Mammary epithelial cell (primary cell): ENCODE measurements at regions of chr15 and their contacts with region 1.

Region 1: GRCh38 chr15:97995881-97996603 is 35.5 kb downstream of the ARRDC4 start:
- DNase-seq: peak; percentile 89
- H3K4me3 ChIP-seq: peak overlapping the region; percentile 26 to 41 (median 30)
- H3K27ac ChIP-seq: peak overlapping the region; percentile 92
- H3K4me1 ChIP-seq: peaks cover 48% of the 10 kb centered on the region
- H3K27me3 ChIP-seq: no peaks in the 10 kb centered on the region
- CTCF ChIP-seq: peak; percentile 47 to 48

Region 2: DNA sequence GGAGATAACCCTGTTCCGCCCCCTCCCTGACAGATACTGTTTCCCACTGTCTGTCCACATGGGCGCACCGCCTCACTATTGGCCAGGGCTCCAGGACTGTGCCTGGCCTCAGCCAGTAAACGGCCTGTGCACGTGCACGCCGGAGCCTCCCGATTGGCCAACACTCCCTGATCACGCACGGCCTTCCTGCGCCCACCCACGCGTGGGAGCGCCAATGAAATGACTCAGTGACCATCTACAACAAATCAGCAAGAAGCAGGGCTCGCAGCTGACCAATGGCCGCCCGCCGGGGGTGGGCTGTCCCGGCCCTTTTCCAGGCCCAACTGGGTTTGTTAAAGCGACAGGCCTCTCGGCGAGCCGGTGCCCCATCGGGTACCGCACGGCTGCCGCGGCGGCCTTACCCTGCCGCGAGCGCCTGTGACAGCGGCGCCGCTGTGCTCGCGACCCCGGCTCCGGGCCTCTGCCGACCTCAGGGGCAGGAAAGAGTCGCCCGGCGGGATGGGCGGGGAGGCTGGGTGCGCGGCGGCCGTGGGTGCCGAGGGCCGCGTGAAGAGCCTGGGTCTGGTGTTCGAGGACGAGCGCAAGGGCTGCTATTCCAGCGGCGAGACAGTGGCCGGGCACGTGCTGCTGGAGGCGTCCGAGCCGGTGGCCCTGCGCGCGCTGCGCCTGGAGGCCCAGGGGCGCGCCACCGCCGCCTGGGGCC is 35.5 kb before region 1 on chr15 and contains the start of gene ARRDC4:
- CTCF ChIA-PET with region 1: no interaction called
- dilution Hi-C with region 1: loop called (anchors 5 kb)
- in situ Hi-C with region 1: no loop called
- intact Hi-C with region 1: loop called (anchors 1 kb)
- DNase-seq: peak; percentile 100
- H3K4me3 ChIP-seq: peak within 1 kb of the TSS; percentile 68 to 85 (median 78)
- H3K27ac ChIP-seq: peak within 1 kb of the TSS; percentile 82
- H3K4me1 ChIP-seq: peaks cover 8% of the 10 kb centered on the region
- H3K27me3 ChIP-seq: no peaks in the 10 kb centered on the region
- CTCF ChIP-seq: no peak
- total RNA-seq, gene ARRDC4: 18.3 to 61.5 TPM

Region 3: DNA sequence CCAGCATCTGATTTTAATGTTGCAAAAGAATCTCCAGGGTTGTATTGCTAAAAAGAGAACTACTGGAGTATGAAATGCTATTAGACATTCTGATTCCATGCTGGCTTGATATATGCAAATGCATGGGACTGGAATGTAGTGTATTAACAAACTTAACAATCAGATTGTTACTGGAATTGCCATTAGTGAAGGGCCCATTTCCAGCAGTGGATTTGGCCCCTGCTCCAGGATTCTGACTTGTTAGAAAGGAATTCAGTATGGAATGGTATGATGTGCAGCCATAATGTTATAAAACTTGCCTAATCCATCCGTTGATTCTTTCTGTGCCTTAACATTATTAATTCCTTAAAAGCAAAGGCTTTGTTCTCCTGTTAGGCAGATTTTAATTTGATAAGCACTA is 27.7 kb before region 1 on chr15:
- CTCF ChIA-PET with region 1: no interaction called
- dilution Hi-C with region 1: loop called (anchors 5 kb)
- in situ Hi-C with region 1: no loop called
- intact Hi-C with region 1: no loop called
- DNase-seq: no peak
- H3K4me3 ChIP-seq: no peak overlapping the region
- H3K27ac ChIP-seq: no peak overlapping the region
- H3K4me1 ChIP-seq: peaks cover 8% of the 10 kb centered on the region
- H3K27me3 ChIP-seq: no peaks in the 10 kb centered on the region
- CTCF ChIP-seq: no peak

Region 4: DNA sequence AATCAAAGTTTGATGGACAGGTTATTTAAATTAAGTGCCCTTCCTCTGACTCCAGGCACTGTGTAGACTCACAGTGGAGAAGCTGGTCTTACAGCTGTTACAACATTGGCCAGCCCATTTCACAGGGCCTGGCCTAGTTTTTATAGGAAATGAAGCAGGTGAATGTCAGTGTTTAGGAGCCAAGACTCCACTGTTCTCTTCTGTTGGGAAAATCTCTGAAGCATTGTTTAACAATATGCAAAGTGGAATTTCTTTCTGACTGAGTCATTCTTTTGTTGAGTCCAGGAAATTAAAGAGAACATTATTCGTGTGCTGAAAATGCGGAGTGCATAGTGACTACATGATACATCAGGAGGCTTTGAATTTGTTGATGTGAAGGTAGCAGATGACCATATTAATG is 29.2 kb after region 1 on chr15:
- CTCF ChIA-PET with region 1: no interaction called
- dilution Hi-C with region 1: no loop called
- in situ Hi-C with region 1: no loop called
- intact Hi-C with region 1: loop called (anchors 1 kb)
- DNase-seq: peak; percentile 81
- H3K4me3 ChIP-seq: no peak overlapping the region
- H3K27ac ChIP-seq: peak overlapping the region; percentile 40
- H3K4me1 ChIP-seq: peaks cover 12% of the 10 kb centered on the region
- H3K27me3 ChIP-seq: no peaks in the 10 kb centered on the region
- CTCF ChIP-seq: no peak

Region 5: DNA sequence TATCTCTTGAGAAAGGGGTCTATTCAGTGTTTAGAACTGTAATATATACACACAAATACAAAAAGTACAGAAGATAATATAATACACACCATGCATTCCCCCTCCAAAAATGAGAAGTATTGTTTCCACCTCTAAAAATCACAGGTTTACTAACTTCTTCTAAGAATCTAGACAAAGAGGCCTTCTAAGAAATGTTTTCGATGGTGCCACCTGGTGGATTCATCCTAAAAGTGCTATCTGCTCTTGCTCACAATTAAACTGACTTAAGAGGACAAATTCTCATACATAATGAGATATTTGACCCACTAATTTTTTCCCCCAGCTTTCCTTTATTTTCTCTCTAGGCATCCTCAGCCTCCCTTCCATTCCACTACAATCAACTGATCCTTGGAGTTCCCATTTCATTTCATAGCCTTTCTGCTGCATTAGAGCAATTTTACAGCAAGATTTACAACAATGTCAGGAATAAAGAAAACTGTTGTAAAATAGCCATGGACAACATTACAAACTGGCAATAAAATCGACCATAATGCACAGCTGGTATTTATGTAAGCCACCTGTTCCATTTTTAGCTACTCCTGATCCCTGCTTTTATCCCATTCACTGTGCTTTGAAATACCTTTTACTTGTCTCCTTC is 89.1 kb after region 1 on chr15:
- CTCF ChIA-PET with region 1: interaction called, 6 read pairs
- dilution Hi-C with region 1: no loop called
- in situ Hi-C with region 1: no loop called
- intact Hi-C with region 1: loop called (anchors 1 kb)
- DNase-seq: peak; percentile 51
- H3K4me3 ChIP-seq: no peak overlapping the region
- H3K27ac ChIP-seq: no peak overlapping the region
- H3K4me1 ChIP-seq: no peaks in the 10 kb centered on the region
- H3K27me3 ChIP-seq: no peaks in the 10 kb centered on the region
- CTCF ChIP-seq: peak; percentile 67 to 71

Region 6: DNA sequence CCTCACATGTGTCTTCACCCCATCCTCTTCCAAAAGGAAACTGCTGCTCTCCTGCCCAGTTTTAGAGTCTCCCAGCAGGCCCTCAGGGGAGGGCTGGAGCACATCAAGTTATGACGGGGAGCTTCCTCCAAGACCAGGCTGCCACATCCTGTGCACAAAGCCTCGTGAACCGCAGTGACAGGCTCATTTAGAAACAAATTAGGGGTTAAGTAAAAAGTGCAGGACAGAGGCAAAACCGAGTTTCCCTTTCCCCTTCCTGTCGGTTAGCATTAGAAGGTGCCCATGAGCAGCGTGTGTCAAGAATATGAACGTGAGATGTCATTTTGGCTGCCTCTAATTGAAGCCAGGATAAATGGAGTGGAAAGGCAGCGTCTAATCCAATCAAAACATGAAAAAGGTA is 164.2 kb after region 1 on chr15:
- CTCF ChIA-PET with region 1: no interaction called
- dilution Hi-C with region 1: loop called (anchors 10 kb)
- in situ Hi-C with region 1: no loop called
- intact Hi-C with region 1: loop called (anchors 5 kb)
- DNase-seq: no peak
- H3K4me3 ChIP-seq: no peak overlapping the region
- H3K27ac ChIP-seq: no peak overlapping the region
- H3K4me1 ChIP-seq: peaks cover 26% of the 10 kb centered on the region
- H3K27me3 ChIP-seq: no peaks in the 10 kb centered on the region
- CTCF ChIP-seq: no peak

Region 7: GRCh38 chr15:98169551-98169950 is 173.5 kb after region 1 on chr15:
- CTCF ChIA-PET with region 1: interaction called, 3 read pairs
- dilution Hi-C with region 1: loop called (anchors 10 kb)
- in situ Hi-C with region 1: no loop called
- intact Hi-C with region 1: loop called (anchors 5 kb)
- DNase-seq: no peak
- H3K4me3 ChIP-seq: no peak overlapping the region
- H3K27ac ChIP-seq: no peak overlapping the region
- H3K4me1 ChIP-seq: peaks cover 23% of the 10 kb centered on the region
- H3K27me3 ChIP-seq: no peaks in the 10 kb centered on the region
- CTCF ChIP-seq: no peak